ENCODE measurements at regions of chr5 and their contacts with region 1.

Region 1: DNA sequence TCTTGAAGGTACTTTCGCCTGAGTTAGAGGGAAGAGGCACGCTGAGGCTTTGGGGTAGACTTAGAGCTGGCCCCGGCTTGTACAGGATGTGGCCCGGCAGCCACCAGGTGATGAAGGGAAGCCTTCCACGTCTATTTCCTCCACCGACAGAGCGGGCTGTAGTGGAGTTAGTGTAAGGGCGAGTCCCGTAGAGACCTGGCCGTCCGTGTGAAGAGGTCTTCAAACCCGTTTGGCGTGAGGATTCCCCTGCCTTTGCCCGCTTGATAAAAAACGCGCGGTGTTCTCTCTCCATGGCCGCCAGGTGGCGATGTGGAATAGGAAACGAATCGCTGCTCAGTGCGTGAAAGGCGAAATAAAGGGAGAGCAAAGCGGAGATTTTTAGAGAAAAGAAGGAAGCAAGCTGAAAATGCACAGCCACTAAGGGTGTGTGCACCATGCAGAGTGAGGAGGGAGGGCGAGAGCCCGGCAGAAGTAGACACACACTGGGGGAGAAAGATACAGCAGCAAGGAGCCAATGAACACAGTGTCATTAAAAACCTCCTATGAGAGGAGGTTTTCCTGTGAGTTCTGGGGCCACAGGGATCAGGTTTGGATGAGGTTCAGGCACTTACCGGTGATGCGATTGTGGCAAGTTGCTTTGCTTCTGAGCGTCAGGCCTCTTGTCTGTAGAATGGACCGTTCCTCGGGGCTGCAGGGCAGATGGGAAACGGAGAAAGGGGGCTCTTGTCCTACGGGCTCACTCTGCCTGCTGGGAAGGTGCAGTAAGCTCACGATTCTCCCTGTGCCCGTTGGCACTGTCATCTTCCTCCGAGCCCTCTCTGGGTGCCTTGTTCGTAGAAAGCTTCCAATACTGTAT is 34.2 kb downstream of the STC2 start:
- DNase-seq: peak; percentile 89
- ATAC-seq: peak; percentile 83

Region 2: GRCh38 chr5:173331956-173332479 is 38.0 kb after region 1 on chr5:
- intact Hi-C with region 1: loop called (anchors 5 kb)
- DNase-seq: peak; percentile 88
- ATAC-seq: peak; percentile 93

Region 3: GRCh38 chr5:173498286-173498685 is 204.2 kb after region 1 on chr5:
- intact Hi-C with region 1: loop called (anchors 10 kb)
- DNase-seq: no peak
- ATAC-seq: peak; percentile 35

Region 4: DNA sequence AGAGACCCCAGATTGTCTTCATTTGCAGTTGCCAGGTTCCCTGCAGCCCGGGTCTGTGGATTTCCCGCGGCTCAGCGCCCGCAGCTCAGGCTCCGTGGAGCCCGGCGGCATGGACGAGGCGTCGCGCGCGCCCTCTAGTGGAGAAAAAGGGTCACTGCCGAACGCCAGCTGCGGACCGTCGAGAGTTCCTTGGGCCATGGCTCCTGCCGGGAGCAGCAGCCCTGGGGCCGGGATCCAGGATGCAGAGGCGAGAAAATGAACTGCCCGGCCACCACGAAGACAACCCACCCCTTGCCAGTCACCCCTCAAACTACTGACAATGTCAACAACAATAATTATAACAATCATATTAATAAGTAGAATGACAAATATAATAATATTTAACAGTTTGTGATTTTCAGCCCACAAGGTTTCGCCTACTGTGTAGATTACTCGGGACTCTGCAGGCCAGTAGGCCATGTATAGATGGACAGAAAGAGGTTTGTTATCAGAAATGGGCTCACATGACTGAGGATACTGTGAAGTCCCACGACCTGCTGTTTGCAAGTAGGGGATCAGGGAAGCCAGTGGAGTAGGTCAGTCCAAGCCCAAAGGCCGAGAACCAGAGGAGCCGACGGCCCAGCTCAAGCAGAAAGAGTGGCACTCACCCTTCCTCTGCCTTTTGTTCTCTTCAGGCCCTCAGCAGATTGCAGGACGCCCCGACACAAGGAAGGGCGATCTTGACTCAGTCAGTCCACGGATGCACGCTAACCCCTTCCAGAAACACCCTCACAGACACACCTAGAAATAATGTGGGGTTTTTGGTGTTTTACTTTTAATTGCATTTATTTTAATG is 279.3 kb after region 1 on chr5:
- intact Hi-C with region 1: loop called (anchors 2 kb)
- DNase-seq: peak; percentile 90
- ATAC-seq: peak; percentile 95

Measured in sciatic nerve (tissue), 2 donors.